ENCODE measurements at regions of chr16 and their contacts with region 1.

Region 1: GRCh38 chr16:26169473-26169872 is 477.7 kb downstream of the HS3ST4 start:
- DNase-seq: no peak
- H3K4me3 ChIP-seq: no peak overlapping the region
- H3K27ac ChIP-seq: no peak overlapping the region
- H3K4me1 ChIP-seq: no peaks in the 10 kb centered on the region
- H3K27me3 ChIP-seq: no peaks in the 10 kb centered on the region
- CTCF ChIP-seq: no peak
- EP300 ChIP-seq: no peak
- POLR2A ChIP-seq: no peak

Region 2: GRCh38 chr16:26149364-26150190 is 19.9 kb before region 1 on chr16:
- intact Hi-C with region 1: loop called in 1 of 4 experiments (anchors 2 kb)
- DNase-seq: no peak
- H3K4me3 ChIP-seq: no peak overlapping the region
- H3K27ac ChIP-seq: no peak overlapping the region
- H3K4me1 ChIP-seq: no peaks in the 10 kb centered on the region
- H3K27me3 ChIP-seq: no peaks in the 10 kb centered on the region
- CTCF ChIP-seq: no peak
- EP300 ChIP-seq: no peak
- POLR2A ChIP-seq: no peak

Region 3: GRCh38 chr16:26214581-26215174 is 45.2 kb after region 1 on chr16:
- intact Hi-C with region 1: loop called in 1 of 4 experiments (anchors 5 kb)
- DNase-seq: no peak
- H3K4me3 ChIP-seq: no peak overlapping the region
- H3K27ac ChIP-seq: no peak overlapping the region
- H3K4me1 ChIP-seq: no peaks in the 10 kb centered on the region
- H3K27me3 ChIP-seq: no peaks in the 10 kb centered on the region
- CTCF ChIP-seq: no peak
- EP300 ChIP-seq: no peak
- POLR2A ChIP-seq: no peak

Region 4: GRCh38 chr16:26231647-26232046 is 62.2 kb after region 1 on chr16:
- intact Hi-C with region 1: no loop called
- DNase-seq: no peak
- H3K4me3 ChIP-seq: no peak overlapping the region
- H3K27ac ChIP-seq: no peak overlapping the region
- H3K4me1 ChIP-seq: no peaks in the 10 kb centered on the region
- H3K27me3 ChIP-seq: no peaks in the 10 kb centered on the region
- CTCF ChIP-seq: no peak
- EP300 ChIP-seq: no peak
- POLR2A ChIP-seq: no peak